ENCODE measurements at regions of chr13 and their contacts with region 1.

Region 1: GRCh38 chr13:99656092-99656745 is 154.9 kb downstream of the TM9SF2 start:
- DNase-seq: peak; percentile 59
- H3K4me3 ChIP-seq: no peak overlapping the region
- H3K27ac ChIP-seq: no peak overlapping the region
- H3K4me1 ChIP-seq: peaks cover 14% of the 10 kb centered on the region
- H3K27me3 ChIP-seq: peaks cover 2 to 6% of the 10 kb centered on the region in 2 experiments
- CTCF ChIP-seq: peak; percentile 87 to 92
- POLR2A ChIP-seq: no peak

Region 2: GRCh38 chr13:99626461-99627082 is 29.6 kb before region 1 on chr13:
- CTCF ChIA-PET with region 1: no interaction called
- POLR2A ChIA-PET with region 1: no interaction called
- dilution Hi-C with region 1: no loop called
- intact Hi-C with region 1: no loop called
- DNase-seq: no peak
- H3K4me3 ChIP-seq: no peak overlapping the region
- H3K27ac ChIP-seq: no peak overlapping the region
- H3K4me1 ChIP-seq: no peaks in the 10 kb centered on the region
- H3K27me3 ChIP-seq: peaks cover 0 to 3% of the 10 kb centered on the region in 2 experiments
- CTCF ChIP-seq: no peak
- POLR2A ChIP-seq: no peak

Region 3: GRCh38 chr13:99886706-99887105 is 230.5 kb after region 1 on chr13:
- CTCF ChIA-PET with region 1: no interaction called
- POLR2A ChIA-PET with region 1: no interaction called
- dilution Hi-C with region 1: no loop called
- intact Hi-C with region 1: no loop called
- DNase-seq: no peak
- H3K4me3 ChIP-seq: no peak overlapping the region
- H3K27ac ChIP-seq: no peak overlapping the region
- H3K4me1 ChIP-seq: no peaks in the 10 kb centered on the region
- H3K27me3 ChIP-seq: peaks cover 0 to 3% of the 10 kb centered on the region in 2 experiments
- CTCF ChIP-seq: no peak
- POLR2A ChIP-seq: no peak

Region 4: GRCh38 chr13:99900960-99901359 is 244.7 kb after region 1 on chr13:
- CTCF ChIA-PET with region 1: no interaction called
- POLR2A ChIA-PET with region 1: no interaction called
- dilution Hi-C with region 1: no loop called
- intact Hi-C with region 1: loop called (anchors 5 kb)
- DNase-seq: no peak
- H3K4me3 ChIP-seq: no peak overlapping the region
- H3K27ac ChIP-seq: no peak overlapping the region
- H3K4me1 ChIP-seq: no peaks in the 10 kb centered on the region
- H3K27me3 ChIP-seq: peaks cover 26 to 31% of the 10 kb centered on the region in 2 experiments
- CTCF ChIP-seq: no peak
- POLR2A ChIP-seq: no peak

Region 5: DNA sequence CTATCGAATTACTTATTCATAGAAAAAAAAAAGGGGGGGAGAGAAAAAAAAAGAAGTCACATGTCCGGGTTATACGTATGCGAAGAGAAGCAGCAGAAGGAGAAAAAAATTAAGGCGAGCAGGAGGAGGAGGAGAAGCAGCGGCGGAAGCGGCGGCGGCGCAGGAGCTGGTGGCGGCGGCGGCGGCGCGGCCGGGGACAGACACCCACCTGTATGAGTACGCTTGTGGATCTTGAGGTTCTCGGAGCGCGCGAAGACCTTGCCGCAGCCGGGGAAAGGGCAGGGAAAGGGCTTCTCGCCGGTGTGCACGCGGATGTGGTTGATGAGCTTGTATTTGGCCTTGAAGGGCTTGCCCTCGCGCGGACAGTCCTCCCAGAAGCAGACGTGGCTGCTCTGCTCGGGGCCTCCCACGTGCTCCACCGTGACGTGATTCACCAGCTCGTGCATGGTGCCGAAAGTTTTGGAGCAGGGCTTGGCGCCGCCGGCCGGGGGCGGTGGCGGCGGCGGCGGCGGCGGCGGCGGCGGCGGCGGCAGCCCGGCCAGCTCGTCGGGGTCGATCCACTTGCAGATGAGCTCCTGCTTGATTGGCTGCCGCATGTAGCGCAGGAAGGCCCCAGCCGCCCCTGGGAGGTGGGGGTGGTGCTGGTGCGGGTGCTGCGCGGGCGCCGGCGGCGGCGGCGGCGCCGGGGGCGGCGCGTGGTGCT is 313.9 kb after region 1 on chr13:
- CTCF ChIA-PET with region 1: no interaction called
- POLR2A ChIA-PET with region 1: no interaction called
- dilution Hi-C with region 1: no loop called
- intact Hi-C with region 1: loop called (anchors 10 kb)
- DNase-seq: no peak
- H3K4me3 ChIP-seq: no peak overlapping the region
- H3K27ac ChIP-seq: no peak overlapping the region
- H3K4me1 ChIP-seq: no peaks in the 10 kb centered on the region
- H3K27me3 ChIP-seq: peaks cover 79 to 94% of the 10 kb centered on the region in 2 experiments
- CTCF ChIP-seq: no peak
- POLR2A ChIP-seq: no peak

Region 6: GRCh38 chr13:100514788-100515409 is 858.7 kb after region 1 on chr13:
- CTCF ChIA-PET with region 1: interaction called, 28 read pairs
- POLR2A ChIA-PET with region 1: no interaction called
- dilution Hi-C with region 1: no loop called
- intact Hi-C with region 1: loop called (anchors 1 kb)
- DNase-seq: peak; percentile 79
- H3K4me3 ChIP-seq: no peak overlapping the region
- H3K27ac ChIP-seq: no peak overlapping the region
- H3K4me1 ChIP-seq: no peaks in the 10 kb centered on the region
- H3K27me3 ChIP-seq: no peaks in the 10 kb centered on the region
- CTCF ChIP-seq: peak; percentile 81 to 91
- POLR2A ChIP-seq: no peak

Region 7: DNA sequence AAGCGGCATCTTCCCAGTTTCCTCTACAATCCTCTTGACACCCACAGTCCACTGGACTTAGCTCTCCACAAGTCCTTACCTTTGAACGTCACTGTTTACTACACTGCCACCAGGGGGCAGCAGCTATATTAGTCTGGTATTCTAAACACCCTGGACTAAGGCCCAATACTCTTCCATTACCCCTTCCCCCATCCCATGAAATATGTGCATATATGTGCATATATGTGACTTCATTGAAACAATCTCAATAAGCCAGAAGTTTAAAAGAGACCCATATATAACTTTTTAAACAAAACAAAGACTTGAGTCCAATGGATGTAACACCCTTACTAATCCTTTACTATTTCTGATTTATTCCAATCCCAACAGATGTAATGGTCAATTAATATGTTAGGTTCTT is 916.9 kb after region 1 on chr13:
- CTCF ChIA-PET with region 1: interaction called, 6 read pairs
- POLR2A ChIA-PET with region 1: no interaction called
- dilution Hi-C with region 1: no loop called
- intact Hi-C with region 1: loop called (anchors 5 kb)
- DNase-seq: peak; percentile 83
- H3K4me3 ChIP-seq: no peak overlapping the region
- H3K27ac ChIP-seq: no peak overlapping the region
- H3K4me1 ChIP-seq: no peaks in the 10 kb centered on the region
- H3K27me3 ChIP-seq: no peaks in the 10 kb centered on the region
- CTCF ChIP-seq: peak; percentile 72 to 75
- POLR2A ChIP-seq: no peak

Region 8: DNA sequence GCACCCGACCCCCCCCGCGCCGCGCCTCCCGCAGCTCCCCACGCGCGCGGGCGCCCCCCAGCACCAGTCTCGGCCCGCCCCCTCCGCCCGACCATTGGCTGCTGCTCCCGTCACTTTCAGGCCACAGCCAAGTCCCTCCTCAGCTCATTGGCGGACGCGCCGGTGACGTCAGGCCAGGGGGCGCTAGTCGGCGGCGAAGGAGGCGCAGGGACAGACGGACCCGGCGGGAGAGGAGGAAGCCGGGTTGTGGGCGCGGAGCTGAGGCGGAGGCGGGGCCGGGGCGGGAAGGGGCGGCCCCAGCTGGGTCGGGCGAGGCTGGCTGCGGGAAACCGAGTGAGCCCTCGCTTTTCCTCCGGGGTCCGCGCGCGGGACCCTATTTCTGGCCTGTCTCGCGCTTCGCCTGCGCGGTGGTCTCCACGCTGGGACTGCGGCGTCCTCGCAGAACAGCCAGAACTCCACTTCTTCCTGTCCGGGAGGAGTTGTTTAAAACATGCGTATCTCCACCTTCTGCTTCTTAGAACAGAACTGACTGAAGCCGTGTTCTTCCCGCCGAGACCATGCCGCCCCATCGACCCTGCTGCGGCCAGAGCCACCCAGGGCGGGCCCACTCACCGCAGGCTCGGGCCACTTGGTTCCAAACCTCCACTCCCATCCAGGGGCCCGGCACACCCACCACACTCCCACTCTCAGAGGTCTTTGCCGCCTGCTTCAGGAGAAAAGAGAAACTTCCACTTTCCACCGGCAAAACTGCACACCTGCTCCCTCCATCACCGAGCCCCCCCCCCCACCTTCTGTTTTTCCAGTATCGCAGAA is 1018.8 kb after region 1 on chr13:
- CTCF ChIA-PET with region 1: no interaction called
- POLR2A ChIA-PET with region 1: no interaction called
- dilution Hi-C with region 1: no loop called
- intact Hi-C with region 1: loop called (anchors 2 kb)
- DNase-seq: peak; percentile 99
- H3K4me3 ChIP-seq: peak overlapping the region; percentile 60 to 82 (median 81)
- H3K27ac ChIP-seq: peak overlapping the region; percentile 60
- H3K4me1 ChIP-seq: peaks cover 14% of the 10 kb centered on the region
- H3K27me3 ChIP-seq: peaks cover 0 to 3% of the 10 kb centered on the region in 2 experiments
- CTCF ChIP-seq: peak in 1 of 2 donors; percentile 45
- POLR2A ChIP-seq: no peak

Region 9: GRCh38 chr13:101127741-101128353 is 1471.6 kb after region 1 on chr13:
- CTCF ChIA-PET with region 1: interaction called, 26 read pairs
- POLR2A ChIA-PET with region 1: no interaction called
- dilution Hi-C with region 1: no loop called
- intact Hi-C with region 1: loop called (anchors 1 kb)
- DNase-seq: peak; percentile 66
- H3K4me3 ChIP-seq: no peak overlapping the region
- H3K27ac ChIP-seq: no peak overlapping the region
- H3K4me1 ChIP-seq: no peaks in the 10 kb centered on the region
- H3K27me3 ChIP-seq: no peaks in the 10 kb centered on the region
- CTCF ChIP-seq: peak; percentile 61 to 63
- POLR2A ChIP-seq: no peak

Measured in endothelial cell of umbilical vein (primary cell).